ENCODE measurements at regions of chr4 and their contacts with region 1.

Region 1: DNA sequence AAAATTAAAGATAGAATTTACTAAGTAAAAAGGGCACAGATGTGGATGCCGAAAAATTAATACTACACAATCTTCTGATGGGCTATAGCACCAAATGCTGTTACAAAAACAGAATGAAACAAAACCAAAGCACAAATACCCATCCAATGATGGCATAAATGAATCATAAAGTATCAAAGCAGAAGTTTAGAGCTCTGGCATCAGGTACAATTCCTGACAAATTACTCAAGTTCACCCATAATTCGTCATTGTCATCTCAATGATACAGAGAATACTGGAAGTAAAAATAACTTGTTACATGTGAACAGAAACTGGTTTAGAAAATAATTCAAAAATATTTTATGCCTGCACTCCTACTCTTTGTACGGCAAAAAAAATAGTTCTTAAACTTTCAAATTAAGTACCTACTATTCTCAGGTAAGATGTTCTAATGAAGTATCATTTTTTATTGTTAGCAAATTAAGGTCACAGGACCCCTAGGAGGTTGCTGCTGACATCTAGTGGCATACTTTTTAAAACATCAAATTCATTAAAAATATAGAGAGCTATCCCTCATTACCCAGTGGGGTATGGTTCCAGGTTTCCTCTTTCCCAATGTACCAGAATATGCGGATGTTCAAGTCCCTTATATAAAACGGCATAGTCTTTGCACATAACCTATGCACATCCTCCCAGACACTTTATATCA is 126.1 kb downstream of the INPP4B start:
- DNase-seq: no peak
- ATAC-seq: peak; percentile 65
- H3K4me3 Mint-ChIP-seq: no peak overlapping the region
- H3K27ac Mint-ChIP-seq: no peak overlapping the region
- H3K4me1 Mint-ChIP-seq: peaks cover 8% of the 10 kb centered on the region
- H3K27me3 Mint-ChIP-seq: no peaks in the 10 kb centered on the region
- CTCF ChIP-seq: peak; percentile 74

Region 2: GRCh38 chr4:142549726-142550463 is 170.1 kb before region 1 on chr4:
- CTCF ChIA-PET with region 1: no interaction called
- POLR2A ChIA-PET with region 1: no interaction called
- intact Hi-C with region 1: loop called (anchors 10 kb)
- DNase-seq: no peak
- ATAC-seq: peak; percentile 87
- H3K4me3 Mint-ChIP-seq: no peak overlapping the region
- H3K27ac Mint-ChIP-seq: no peak overlapping the region
- H3K4me1 Mint-ChIP-seq: peaks cover 23% of the 10 kb centered on the region
- H3K27me3 Mint-ChIP-seq: no peaks in the 10 kb centered on the region
- CTCF ChIP-seq: no peak

Region 3: DNA sequence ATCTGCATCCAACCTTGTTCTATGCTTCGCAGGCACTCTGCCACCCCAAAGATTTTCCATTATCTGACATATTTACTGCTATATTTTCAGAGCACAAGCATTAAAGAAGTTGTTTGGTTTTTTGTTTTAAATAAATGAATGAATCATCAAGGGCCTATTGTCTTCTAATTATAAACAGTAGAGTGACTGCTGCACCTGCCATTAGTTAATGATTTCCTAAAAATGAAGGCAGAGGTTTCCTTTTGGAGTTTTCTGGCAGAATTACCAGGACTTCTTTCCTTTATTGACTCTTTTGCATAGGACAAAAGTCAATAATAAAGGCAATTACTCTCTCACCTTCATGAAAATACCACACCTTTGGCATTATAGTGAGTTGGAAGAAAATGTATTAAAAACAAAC is 112.0 kb before region 1 on chr4:
- CTCF ChIA-PET with region 1: no interaction called
- POLR2A ChIA-PET with region 1: no interaction called
- intact Hi-C with region 1: no loop called
- DNase-seq: no peak
- ATAC-seq: no peak
- H3K4me3 Mint-ChIP-seq: no peak overlapping the region
- H3K27ac Mint-ChIP-seq: no peak overlapping the region
- H3K4me1 Mint-ChIP-seq: no peaks in the 10 kb centered on the region
- H3K27me3 Mint-ChIP-seq: no peaks in the 10 kb centered on the region
- CTCF ChIP-seq: no peak

Region 4: DNA sequence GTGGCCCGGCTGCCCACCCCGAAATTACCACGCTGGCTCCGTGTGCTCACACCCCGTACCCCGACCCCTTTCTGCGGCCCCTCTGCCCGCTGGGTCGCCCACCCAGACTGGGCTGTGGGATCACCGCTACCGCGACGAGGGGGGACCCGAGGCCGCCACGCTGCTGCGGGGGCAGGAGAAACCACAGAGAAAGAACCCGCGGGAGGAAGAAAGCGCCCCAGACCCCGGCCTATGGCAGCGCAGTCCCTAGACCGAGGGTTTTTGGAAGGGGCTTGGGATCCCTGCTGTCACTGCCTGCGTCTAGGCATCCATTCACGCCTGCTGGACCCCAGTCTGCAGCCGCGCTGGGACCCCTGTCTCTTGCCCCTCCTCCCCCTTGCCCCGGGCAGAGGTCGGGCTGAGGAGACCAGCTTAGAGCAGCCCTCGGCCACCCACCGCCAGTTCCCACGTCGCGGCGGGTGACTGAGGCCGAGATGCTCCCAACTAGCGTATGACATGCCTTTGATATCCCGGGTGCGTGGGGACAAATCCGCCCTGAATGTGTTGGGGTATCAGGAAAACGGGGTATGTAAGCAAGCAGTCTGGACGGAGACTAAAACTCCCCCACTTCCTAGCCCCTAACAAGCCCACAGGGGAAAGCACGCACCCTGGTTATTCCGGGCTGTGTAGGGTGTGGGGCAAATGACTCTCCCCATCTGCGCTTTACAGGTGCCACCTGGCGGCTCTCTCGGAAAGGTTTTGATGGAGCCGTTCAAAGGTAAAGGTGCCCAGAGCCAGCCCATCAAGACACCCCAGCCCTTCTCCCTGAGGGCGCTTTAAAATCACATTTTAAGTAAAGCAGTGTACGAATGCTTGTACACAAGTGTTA is 127.0 kb after region 1 on chr4:
- CTCF ChIA-PET with region 1: interaction called, 4 read pairs
- POLR2A ChIA-PET with region 1: no interaction called
- intact Hi-C with region 1: loop called (anchors 10 kb)
- DNase-seq: peak; percentile 83
- ATAC-seq: peak; percentile 84
- H3K4me3 Mint-ChIP-seq: peak overlapping the region; percentile 83
- H3K27ac Mint-ChIP-seq: no peak overlapping the region
- H3K4me1 Mint-ChIP-seq: peaks cover 5% of the 10 kb centered on the region
- H3K27me3 Mint-ChIP-seq: peaks cover 26% of the 10 kb centered on the region
- CTCF ChIP-seq: peak; percentile 62